ENCODE measurements at regions of chr2 and their contacts with region 1.

Region 1: GRCh38 chr2:162007447-162008040 is 66.5 kb downstream of the DPP4 start:
- DNase-seq: no peak
- ATAC-seq: no peak
- H3K4me3 ChIP-seq: no peak overlapping the region
- H3K27ac ChIP-seq: no peak overlapping the region
- H3K4me1 ChIP-seq: no peaks in the 10 kb centered on the region
- H3K27me3 ChIP-seq: no peaks in the 10 kb centered on the region
- CTCF ChIP-seq: peak; percentile 36 to 77 (median 71)
- POLR2A ChIP-seq: no peak
- RAD21 ChIP-seq: peak; percentile 79

Region 2: GRCh38 chr2:161703863-161704262 is 303.7 kb before region 1 on chr2:
- CTCF ChIA-PET with region 1: no interaction called
- POLR2A ChIA-PET with region 1: no interaction called
- RAD21 ChIA-PET with region 1: no interaction called
- intact Hi-C with region 1: no loop called
- DNase-seq: no peak
- ATAC-seq: no peak
- H3K4me3 ChIP-seq: no peak overlapping the region
- H3K27ac ChIP-seq: no peak overlapping the region
- H3K4me1 ChIP-seq: no peaks in the 10 kb centered on the region
- H3K27me3 ChIP-seq: no peaks in the 10 kb centered on the region
- CTCF ChIP-seq: no peak
- POLR2A ChIP-seq: no peak
- RAD21 ChIP-seq: no peak

Region 3: GRCh38 chr2:161788175-161788574 is 219.4 kb before region 1 on chr2:
- CTCF ChIA-PET with region 1: no interaction called
- POLR2A ChIA-PET with region 1: no interaction called
- RAD21 ChIA-PET with region 1: no interaction called
- intact Hi-C with region 1: no loop called
- DNase-seq: no peak
- ATAC-seq: no peak
- H3K4me3 ChIP-seq: no peak overlapping the region
- H3K27ac ChIP-seq: no peak overlapping the region
- H3K4me1 ChIP-seq: no peaks in the 10 kb centered on the region
- H3K27me3 ChIP-seq: no peaks in the 10 kb centered on the region
- CTCF ChIP-seq: no peak
- POLR2A ChIP-seq: no peak
- RAD21 ChIP-seq: no peak

Region 4: DNA sequence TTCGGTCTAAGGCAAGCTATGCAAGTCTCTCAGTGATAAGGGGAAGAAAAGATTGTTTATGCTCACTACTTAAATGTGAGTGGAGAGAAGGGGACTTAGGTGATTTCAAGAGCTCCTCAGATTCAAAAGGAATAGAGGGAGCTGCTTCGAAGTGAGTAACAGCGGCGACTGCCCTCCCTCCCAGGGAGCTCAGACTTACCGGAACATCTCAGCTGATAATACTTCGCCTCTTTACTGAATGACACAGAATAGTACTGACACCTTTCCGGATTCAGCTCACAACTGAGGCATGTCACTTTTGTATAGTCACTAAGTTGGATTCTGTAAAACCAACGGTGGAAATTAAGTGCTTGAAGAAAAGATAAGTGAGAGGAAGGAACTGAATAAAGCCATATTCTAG is 11.0 kb after region 1 on chr2:
- CTCF ChIA-PET with region 1: interaction called, 10 read pairs
- POLR2A ChIA-PET with region 1: no interaction called
- RAD21 ChIA-PET with region 1: no interaction called
- intact Hi-C with region 1: no loop called
- DNase-seq: no peak
- ATAC-seq: no peak
- H3K4me3 ChIP-seq: no peak overlapping the region
- H3K27ac ChIP-seq: no peak overlapping the region
- H3K4me1 ChIP-seq: peaks cover 0 to 14% of the 10 kb centered on the region in 2 experiments; a peak in 2 of 4 replicates
- H3K27me3 ChIP-seq: no peaks in the 10 kb centered on the region
- CTCF ChIP-seq: no peak
- POLR2A ChIP-seq: no peak
- RAD21 ChIP-seq: no peak

Region 5: DNA sequence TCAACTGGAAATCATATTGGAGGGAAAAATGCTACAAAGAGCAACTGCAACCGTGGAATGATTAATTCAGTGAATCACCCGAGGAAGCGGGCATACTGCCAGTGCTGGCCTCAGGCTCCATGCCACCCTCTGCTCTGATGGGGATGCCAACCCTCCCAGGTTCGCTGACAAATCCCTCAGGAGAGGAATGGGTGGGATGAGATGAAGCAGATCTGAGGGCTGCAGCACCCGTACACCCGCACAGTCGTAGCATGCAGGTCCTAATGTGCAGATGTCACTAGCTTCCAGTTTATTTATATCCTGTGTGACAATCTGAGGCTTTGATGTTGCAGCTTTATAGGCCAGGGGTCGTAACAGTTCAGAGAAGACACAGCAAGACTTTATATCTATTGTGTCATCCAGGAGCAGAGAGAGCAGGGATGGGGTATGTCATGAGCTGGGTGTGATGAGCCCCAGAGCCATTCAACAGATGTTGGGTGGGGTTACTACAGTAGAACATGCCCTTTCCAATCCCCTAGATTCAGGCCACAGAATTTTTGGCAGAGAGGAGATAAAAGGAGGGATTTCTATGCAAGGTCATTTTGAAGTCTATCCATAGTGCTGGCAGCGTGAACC is 21.9 kb after region 1 on chr2:
- CTCF ChIA-PET with region 1: no interaction called
- POLR2A ChIA-PET with region 1: no interaction called
- RAD21 ChIA-PET with region 1: no interaction called
- intact Hi-C with region 1: no loop called
- DNase-seq: peak; percentile 35
- ATAC-seq: peak; percentile 68
- H3K4me3 ChIP-seq: no peak overlapping the region
- H3K27ac ChIP-seq: no peak overlapping the region
- H3K4me1 ChIP-seq: peaks cover 30 to 35% of the 10 kb centered on the region in 2 experiments
- H3K27me3 ChIP-seq: no peaks in the 10 kb centered on the region
- CTCF ChIP-seq: no peak
- POLR2A ChIP-seq: no peak
- RAD21 ChIP-seq: no peak

Region 6: DNA sequence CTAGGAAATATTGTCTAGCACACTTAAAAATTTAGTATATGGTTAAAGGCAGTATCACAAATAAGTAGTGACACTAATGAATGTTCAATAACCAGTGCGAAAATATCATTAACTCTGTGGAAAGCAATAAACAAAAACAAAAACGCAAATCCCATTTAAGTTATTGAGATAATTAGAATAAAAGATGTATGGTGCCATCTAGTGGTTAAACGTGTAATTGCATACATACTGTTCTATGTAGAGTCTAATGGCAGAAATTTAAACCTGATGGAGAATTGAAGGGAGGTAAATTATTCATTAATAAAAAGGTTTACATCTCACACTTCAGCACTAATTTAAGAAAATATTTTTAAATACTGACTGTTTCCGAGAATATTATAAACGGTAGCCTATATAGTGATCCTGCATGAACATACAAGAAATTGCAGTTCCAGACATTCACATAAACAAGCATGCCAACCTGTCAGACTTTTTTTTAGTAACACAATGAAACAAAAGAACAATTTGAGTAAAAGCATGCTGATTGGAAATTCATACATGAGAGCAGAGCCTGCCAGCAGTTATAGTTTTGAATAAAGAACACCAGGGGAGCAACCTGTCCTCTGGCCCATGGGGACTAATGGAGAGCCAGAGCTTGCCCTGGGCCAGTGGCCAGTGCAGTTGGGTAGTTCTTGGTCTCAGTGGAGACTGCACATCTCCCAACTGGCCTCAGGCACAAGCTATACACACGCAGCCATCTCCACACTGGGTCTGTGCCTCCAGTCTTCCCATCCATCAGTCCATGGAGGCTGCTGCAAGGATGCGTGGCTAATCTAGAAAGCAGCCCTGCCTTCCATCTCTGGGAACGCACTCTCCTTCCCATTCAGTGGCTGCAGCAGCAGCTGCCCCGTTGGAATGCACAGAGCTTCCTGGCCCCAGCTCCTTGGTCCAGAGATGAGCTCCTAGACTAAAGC is 116.5 kb after region 1 on chr2:
- CTCF ChIA-PET with region 1: interaction called, 7 read pairs
- POLR2A ChIA-PET with region 1: no interaction called
- RAD21 ChIA-PET with region 1: no interaction called
- intact Hi-C with region 1: loop called (anchors 1 kb)
- DNase-seq: peak; percentile 61
- ATAC-seq: peak; percentile 70
- H3K4me3 ChIP-seq: no peak overlapping the region
- H3K27ac ChIP-seq: no peak overlapping the region
- H3K4me1 ChIP-seq: no peaks in the 10 kb centered on the region
- H3K27me3 ChIP-seq: no peaks in the 10 kb centered on the region
- CTCF ChIP-seq: peak; percentile 32 to 86 (median 72); a peak in 5 of 6 replicates
- POLR2A ChIP-seq: no peak
- RAD21 ChIP-seq: peak; percentile 86